ENCODE measurements at regions of chr11 and their contacts with region 1.

Region 1: DNA sequence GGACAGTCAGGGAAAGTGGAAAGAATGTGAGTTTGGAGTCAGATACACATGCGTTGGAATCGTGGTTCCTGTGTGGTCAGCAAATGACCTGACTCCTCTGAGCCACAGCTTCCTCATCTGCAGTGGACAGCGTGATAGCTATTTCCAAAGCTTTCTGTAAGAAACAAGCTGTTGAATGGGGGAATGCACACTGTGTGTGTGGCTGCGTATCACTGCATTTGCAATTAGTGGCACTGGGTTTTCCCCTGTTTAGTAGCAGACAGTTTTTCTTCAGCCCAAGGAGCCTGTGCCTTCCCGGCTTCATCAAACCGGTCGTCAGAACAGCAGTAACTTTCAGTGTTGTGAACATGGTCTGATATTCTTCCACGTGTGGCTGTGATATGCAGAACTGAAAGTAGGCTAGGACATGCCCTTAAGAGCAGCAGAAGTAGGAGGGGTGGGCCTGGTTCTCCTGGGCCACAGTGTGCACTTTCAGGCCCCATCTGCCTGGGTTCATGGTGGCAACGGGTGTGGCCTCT is 121.5 kb downstream of the RRAS2 start:
- DNase-seq: no peak
- H3K4me3 ChIP-seq: no peak overlapping the region
- H3K27ac ChIP-seq: no peak overlapping the region
- H3K4me1 ChIP-seq: peaks cover 0 to under 1% (median 0%) of the 10 kb centered on the region in 4 experiments; a peak in 1 of 7 replicates
- H3K27me3 ChIP-seq: peaks cover 0 to 3% (median 0%) of the 10 kb centered on the region in 4 experiments; a peak in 1 of 7 replicates
- CTCF ChIP-seq: no peak
- EP300 ChIP-seq: no peak
- POLR2A ChIP-seq: no peak
- RAD21 ChIP-seq: no peak

Region 2: DNA sequence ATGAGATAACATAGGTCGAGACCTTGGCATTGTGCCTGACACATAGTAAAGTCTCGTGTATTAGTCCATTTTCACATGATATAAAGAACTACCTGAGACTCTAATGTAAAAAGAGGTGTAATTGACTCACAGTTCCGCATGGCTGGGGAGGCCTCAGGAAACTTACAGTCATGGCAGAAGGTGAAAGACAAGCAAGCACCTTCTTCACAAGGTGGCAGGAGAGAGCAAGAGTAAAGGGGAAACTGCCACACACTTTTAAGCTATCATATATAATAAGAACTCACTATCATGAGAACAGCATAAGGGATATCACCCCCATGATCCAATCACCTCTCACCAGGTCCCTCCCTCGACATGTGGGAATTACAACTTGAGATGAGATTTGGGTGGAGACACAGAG is 109.8 kb before region 1 on chr11:
- CTCF ChIA-PET with region 1: interaction called, 10 read pairs
- POLR2A ChIA-PET with region 1: no interaction called
- DNase-seq: no peak
- H3K4me3 ChIP-seq: no peak overlapping the region
- H3K27ac ChIP-seq: no peak overlapping the region
- H3K4me1 ChIP-seq: no peaks in the 10 kb centered on the region; a peak in 1 of 7 replicates
- H3K27me3 ChIP-seq: no peaks in the 10 kb centered on the region
- CTCF ChIP-seq: peak in 2 of 3 experiments; percentile 27 to 29; a peak in 2 of 4 replicates
- EP300 ChIP-seq: no peak
- POLR2A ChIP-seq: no peak
- RAD21 ChIP-seq: peak; percentile 29 to 50

Region 3: GRCh38 chr11:14202251-14203196 is 35.0 kb before region 1 on chr11:
- CTCF ChIA-PET with region 1: interaction called, 16 read pairs
- POLR2A ChIA-PET with region 1: no interaction called
- DNase-seq: no peak
- H3K4me3 ChIP-seq: no peak overlapping the region
- H3K27ac ChIP-seq: no peak overlapping the region
- H3K4me1 ChIP-seq: peaks cover 0 to 3% (median 1%) of the 10 kb centered on the region in 4 experiments; a peak in 2 of 7 replicates
- H3K27me3 ChIP-seq: no peaks in the 10 kb centered on the region
- CTCF ChIP-seq: no peak
- EP300 ChIP-seq: no peak
- POLR2A ChIP-seq: no peak
- RAD21 ChIP-seq: no peak

Region 4: DNA sequence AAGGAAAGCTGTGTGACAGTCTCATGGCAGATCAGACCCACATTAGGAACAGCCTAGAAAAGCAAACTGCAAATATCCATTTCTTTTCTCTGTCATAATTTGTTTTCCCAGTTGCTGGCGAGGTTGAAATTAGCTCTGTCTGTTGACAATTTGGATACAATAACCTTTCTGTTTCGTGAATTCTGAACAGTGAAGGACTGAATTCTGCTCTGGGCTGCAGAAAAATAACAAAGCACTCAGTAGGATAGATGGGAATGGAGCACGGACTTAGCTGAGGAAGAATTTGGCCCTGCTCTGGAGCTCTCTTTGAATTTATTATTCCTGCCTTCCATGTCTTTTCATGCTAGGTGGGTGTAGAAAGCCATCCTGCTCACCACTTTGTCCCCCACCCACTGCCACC is 18.8 kb before region 1 on chr11:
- CTCF ChIA-PET with region 1: interaction called, 19 read pairs
- POLR2A ChIA-PET with region 1: no interaction called
- DNase-seq: no peak
- H3K4me3 ChIP-seq: no peak overlapping the region
- H3K27ac ChIP-seq: no peak overlapping the region
- H3K4me1 ChIP-seq: no peaks in the 10 kb centered on the region
- H3K27me3 ChIP-seq: no peaks in the 10 kb centered on the region
- CTCF ChIP-seq: no peak
- EP300 ChIP-seq: no peak
- POLR2A ChIP-seq: no peak
- RAD21 ChIP-seq: no peak

Region 5: DNA sequence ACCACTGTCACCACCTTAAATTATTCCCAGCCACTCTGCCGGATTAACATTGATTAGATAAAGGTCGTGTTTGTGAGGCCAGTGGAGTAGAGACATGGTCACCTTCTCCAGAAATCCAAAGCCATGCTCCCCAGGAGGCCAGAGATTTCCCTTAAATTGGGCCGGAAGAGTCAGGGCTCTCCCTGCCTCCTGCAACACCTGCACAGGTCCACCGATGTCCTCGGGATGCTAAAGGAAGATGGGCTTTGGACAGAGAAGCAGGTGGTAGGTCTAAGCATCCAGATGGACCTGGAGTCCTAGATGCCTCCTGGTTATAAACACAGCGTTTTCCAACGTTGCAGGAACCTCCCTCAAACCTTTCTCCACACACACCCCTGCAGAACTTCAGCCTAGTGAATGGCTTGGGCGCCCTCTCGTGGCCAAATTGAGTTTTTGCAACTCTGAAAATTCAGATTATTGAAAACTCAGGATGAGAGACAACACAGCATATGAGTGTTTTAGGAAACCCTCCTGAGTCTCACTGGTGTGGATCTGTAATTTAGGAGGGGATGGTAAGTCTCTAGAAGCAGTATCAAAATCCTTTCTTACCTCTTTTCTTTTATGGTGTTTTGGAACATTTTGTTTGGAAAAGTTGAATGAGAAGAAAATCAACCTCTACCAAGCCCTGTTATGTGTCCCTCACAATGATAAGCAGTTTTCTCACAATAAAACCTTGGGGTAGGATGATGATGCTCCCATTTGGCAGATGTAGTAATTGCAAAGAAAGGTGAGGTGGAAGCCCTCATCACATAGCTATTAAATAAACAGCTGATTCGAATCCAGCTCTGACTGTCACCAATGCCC is 11.8 kb after region 1 on chr11:
- CTCF ChIA-PET with region 1: interaction called, 32 read pairs
- POLR2A ChIA-PET with region 1: no interaction called
- DNase-seq: peak in 1 of 2 experiments; percentile 80
- H3K4me3 ChIP-seq: no peak overlapping the region
- H3K27ac ChIP-seq: no peak overlapping the region
- H3K4me1 ChIP-seq: peaks cover 0 to 6% (median 5%) of the 10 kb centered on the region in 4 experiments; a peak in 4 of 7 replicates
- H3K27me3 ChIP-seq: no peaks in the 10 kb centered on the region
- CTCF ChIP-seq: peak; percentile 42 to 91 (median 88)
- EP300 ChIP-seq: no peak
- POLR2A ChIP-seq: no peak
- RAD21 ChIP-seq: peak; percentile 99 to 100

Region 6: DNA sequence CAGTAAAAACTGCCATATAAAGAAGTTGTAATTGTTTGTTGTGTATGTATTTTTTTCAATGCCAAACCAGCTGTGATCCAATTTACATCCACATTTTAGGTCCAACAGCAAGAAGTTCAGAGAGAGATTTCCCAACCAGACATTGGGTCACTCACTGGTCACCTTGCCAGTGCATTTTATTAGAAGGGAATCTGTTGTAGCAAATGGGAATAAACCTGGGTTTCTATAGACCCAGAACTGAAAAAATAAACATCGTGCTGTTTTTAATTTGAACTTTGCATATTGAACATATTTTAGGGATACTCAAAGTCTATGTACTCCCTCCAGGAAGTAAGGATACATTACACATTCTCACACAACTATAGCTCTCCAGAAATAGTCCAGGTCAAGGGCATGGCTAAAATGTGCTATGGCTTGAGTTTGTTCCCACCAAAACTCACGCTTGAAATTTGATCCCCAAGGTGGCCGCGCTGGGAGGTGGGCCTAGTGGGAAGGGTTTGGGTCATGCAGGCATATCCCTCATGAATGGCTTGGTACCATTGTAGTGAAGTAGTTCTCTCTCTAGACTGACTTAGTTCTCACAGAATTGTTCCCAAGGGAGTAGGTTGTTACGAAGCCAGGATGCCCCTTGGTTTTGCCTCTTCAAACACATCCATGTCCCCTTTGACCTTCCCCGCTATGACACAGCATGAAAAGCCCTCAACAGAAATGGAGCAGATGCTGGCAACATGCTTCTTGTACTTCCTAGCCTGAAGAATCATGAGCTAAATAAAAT is 30.5 kb after region 1 on chr11:
- CTCF ChIA-PET with region 1: no interaction called
- POLR2A ChIA-PET with region 1: no interaction called
- DNase-seq: peak in 1 of 2 experiments; percentile 41
- H3K4me3 ChIP-seq: no peak overlapping the region
- H3K27ac ChIP-seq: no peak overlapping the region
- H3K4me1 ChIP-seq: no peaks in the 10 kb centered on the region
- H3K27me3 ChIP-seq: peaks cover 0 to 2% (median 0%) of the 10 kb centered on the region in 4 experiments; a peak in 1 of 7 replicates
- CTCF ChIP-seq: no peak
- EP300 ChIP-seq: no peak
- POLR2A ChIP-seq: peak in 1 of 2 experiments; percentile 30; a peak in 1 of 3 replicates
- RAD21 ChIP-seq: no peak

Measured in H1 (cell line).